PC-3 (cell line): ENCODE measurements at regions of chr9 and their contacts with region 1.

Region 1: DNA sequence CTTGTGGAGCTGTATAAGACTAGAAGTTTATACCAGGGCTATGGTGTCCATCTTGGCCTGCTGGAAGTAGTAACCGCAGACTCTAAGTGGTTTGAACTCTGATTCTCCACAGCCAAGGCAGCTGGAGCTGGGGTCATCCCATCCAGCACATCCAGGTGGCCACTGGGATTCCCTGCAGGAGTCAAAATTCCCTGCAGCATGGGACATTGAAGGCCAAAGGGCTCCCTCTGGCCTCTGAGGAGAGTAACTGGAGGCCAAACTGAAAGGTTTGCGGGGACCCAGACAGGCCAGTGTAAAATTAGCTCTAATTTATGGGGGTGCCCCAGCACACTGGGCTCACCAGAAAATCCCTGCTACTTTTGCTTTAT is 12.2 kb upstream of the PRXL2C start:
- DNase-seq: no peak
- ATAC-seq: peak; percentile 20; the same call in 1 of the 2 replicates
- H3K4me3 ChIP-seq: no peak overlapping the region
- H3K27ac ChIP-seq: no peak overlapping the region
- H3K4me1 ChIP-seq: no peaks in the 10 kb centered on the region
- H3K27me3 ChIP-seq: no peaks in the 10 kb centered on the region
- CTCF ChIP-seq: 0 out of 2 replicates have a peak, but pooled peaks have one; percentile 18

Region 2: DNA sequence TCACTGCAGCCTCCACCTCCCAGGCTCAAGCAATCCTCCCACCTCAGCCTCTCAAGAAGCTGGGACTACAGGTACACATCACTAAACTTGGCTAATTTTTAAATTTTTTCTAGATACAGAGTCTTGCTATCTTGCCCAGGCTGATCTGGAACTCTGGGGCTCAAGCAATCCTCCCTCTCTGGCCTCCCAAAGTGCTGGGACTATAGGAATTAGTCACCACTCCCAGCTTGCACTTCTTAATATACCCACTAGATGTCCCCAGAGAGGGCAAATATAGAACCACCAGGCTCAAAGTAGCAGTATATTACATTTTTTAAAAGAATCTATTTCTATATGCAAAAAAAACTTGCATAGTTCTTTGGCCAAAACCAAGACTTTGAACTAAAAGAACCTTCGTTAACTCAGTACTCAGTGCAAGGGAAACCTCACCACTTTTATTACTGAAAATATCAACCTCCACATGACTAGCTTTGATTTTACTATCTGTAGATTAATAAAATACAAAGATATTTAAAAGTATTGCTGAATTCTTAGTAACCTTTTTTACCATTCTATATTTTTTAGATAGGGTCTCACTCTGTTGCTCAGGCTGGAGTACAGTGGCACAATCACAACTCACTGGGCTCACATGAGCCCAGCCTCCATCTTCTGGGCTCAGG is 339.5 kb before region 1 on chr9:
- CTCF ChIA-PET with region 1: interaction called, 5 read pairs
- POLR2A ChIA-PET with region 1: no interaction called
- intact Hi-C with region 1: loop called (anchors 5 kb)
- DNase-seq: peak; percentile 80
- ATAC-seq: peak; percentile 61
- H3K4me3 ChIP-seq: no peak overlapping the region
- H3K27ac ChIP-seq: no peak overlapping the region
- H3K4me1 ChIP-seq: peaks cover 16% of the 10 kb centered on the region
- H3K27me3 ChIP-seq: no peaks in the 10 kb centered on the region
- CTCF ChIP-seq: peak; percentile 69

Region 3: DNA sequence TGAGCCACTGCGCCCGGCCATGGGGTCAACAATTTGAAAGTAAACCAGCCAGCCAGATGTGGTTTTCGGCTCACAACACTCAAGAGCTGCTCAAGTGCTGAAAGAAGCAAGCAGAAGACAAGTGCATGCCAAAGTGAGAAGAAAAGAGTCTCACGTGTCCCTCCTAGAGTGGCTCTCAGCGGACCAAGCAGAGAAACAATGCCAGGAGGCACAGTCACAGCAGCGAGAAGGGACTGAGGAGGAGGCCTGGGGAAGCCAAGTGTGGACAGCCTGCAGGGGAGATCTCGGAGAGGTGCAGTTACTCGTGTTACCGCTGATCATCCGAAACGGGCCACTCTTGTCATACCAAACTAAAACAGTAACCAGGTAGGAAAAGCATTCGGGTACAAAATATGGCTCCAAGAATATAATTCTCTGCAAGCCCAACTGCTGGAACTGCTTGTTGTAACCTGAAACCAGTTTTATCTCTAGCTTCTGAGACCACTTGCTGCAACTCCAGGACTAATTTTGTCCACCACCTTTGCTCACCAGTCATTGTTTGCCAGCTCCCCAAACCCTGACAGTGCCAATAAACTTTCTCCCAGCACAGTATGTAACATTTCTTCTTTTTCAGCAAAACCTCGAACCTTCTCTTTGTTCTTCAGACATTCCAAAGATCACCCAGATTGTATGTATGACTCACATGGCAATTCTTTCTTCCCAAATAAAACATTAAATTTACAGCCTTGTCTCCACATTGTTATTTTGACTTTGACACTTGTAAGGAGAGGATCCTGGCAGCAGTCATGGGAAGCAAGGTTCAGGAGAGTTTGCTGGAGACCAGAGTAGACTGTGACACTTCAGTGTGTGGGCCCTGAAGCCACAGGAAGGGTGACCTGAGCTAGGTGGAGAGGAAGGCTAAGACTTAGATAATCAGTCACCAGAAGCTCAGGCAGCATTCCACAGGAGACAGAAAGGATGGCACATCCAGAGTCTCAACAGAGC is 290.2 kb before region 1 on chr9:
- CTCF ChIA-PET with region 1: no interaction called
- POLR2A ChIA-PET with region 1: no interaction called
- intact Hi-C with region 1: no loop called
- DNase-seq: peak; percentile 69
- ATAC-seq: peak; percentile 87
- H3K4me3 ChIP-seq: no peak overlapping the region
- H3K27ac ChIP-seq: peak overlapping the region; percentile 58
- H3K4me1 ChIP-seq: peaks cover 16% of the 10 kb centered on the region
- H3K27me3 ChIP-seq: no peaks in the 10 kb centered on the region
- CTCF ChIP-seq: no peak

Region 4: DNA sequence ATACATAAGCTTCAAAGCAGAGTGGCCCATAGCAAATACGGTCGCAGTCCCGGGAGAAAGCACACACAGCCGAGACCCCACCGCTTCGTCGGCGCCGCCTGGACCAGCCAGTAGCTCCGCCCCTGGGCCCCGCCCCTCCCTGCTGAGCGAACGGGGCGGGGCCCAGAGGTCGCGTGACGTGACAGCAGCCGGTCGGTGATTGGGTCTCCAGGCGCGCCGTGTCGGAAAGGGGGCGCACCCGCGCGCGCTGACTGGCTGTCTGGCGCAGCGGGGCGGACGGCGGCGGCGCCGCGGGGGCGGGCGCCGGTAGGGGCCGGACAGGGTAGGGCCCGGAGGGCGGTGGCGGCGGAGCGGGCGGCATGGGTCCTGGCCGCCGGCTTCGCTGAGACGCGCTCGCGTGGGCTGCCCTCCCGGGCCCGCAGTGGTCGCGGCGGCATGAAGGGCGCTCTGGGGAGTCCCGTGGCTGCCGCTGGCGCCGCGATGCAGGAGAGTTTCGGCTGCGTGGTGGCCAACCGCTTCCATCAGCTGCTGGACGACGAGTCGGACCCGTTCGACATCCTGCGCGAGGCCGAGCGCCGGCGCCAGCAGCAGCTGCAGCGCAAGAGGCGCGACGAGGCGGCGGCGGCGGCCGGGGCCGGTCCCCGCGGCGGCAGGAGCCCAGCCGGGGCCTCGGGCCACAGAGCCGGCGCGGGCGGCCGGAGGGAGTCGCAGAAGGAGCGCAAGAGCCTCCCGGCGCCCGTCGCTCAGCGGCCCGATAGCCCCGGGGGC is 217.3 kb before region 1 on chr9 and contains the start of gene HABP4:
- CTCF ChIA-PET with region 1: no interaction called
- POLR2A ChIA-PET with region 1: interaction called, 3 read pairs
- intact Hi-C with region 1: loop called (anchors 5 kb)
- DNase-seq: peak; percentile 91
- ATAC-seq: peak; percentile 93
- H3K4me3 ChIP-seq: peak within 1 kb of the TSS; percentile 77
- H3K27ac ChIP-seq: no peak within 1 kb of the TSS
- H3K4me1 ChIP-seq: peaks cover 18% of the 10 kb centered on the region
- H3K27me3 ChIP-seq: no peaks in the 10 kb centered on the region
- CTCF ChIP-seq: no peak
- total RNA-seq, gene HABP4: 6.6 and 9.2 TPM in 2 replicates

Region 5: DNA sequence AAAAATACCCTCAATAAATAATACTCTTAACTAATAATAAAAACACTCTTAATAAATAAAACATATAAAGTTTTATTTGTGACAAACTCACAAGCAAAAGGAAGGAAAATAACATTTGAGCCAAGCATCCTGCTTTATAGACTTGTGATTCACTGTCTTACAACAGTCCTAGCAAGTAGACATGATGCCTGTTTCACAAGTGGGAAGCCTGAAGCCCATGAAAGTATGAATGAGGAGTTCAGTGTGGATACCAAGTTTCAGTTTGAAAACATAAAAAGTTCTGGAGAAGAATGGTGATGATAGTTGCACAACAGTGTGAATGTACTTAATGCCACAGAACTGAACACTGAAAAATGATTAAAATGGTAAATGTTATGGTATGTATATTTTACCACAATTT is 206.5 kb before region 1 on chr9:
- CTCF ChIA-PET with region 1: no interaction called
- POLR2A ChIA-PET with region 1: no interaction called
- intact Hi-C with region 1: no loop called
- DNase-seq: no peak
- ATAC-seq: no peak
- H3K4me3 ChIP-seq: no peak overlapping the region
- H3K27ac ChIP-seq: no peak overlapping the region
- H3K4me1 ChIP-seq: peaks cover 7% of the 10 kb centered on the region; the same call in 1 of the 2 replicates
- H3K27me3 ChIP-seq: no peaks in the 10 kb centered on the region
- CTCF ChIP-seq: no peak